ENCODE measurements at regions of chr5 and their contacts with region 1.

Region 1: GRCh38 chr5:68215208-68215897 is at the start of gene PIK3R1:
- DNase-seq: peak; percentile 92 to 95
- ATAC-seq: peak; percentile 81 to 84
- H3K4me3 ChIP-seq: peak within 1 kb of the TSS; percentile 85 to 100 (median 92)
- H3K27ac ChIP-seq: peak within 1 kb of the TSS; percentile 94 to 98 (median 96)
- H3K4me1 ChIP-seq: peaks cover 21 to 28% of the 10 kb centered on the region in 2 donors
- H3K27me3 ChIP-seq: no peaks in the 10 kb centered on the region
- CTCF ChIP-seq: peak; percentile 55 to 67 (median 55)
- POLR2A ChIP-seq: peak; percentile 98 to 99
- total RNA-seq, gene PIK3R1: 87.2 to 129 (median 100) TPM

Region 2: DNA sequence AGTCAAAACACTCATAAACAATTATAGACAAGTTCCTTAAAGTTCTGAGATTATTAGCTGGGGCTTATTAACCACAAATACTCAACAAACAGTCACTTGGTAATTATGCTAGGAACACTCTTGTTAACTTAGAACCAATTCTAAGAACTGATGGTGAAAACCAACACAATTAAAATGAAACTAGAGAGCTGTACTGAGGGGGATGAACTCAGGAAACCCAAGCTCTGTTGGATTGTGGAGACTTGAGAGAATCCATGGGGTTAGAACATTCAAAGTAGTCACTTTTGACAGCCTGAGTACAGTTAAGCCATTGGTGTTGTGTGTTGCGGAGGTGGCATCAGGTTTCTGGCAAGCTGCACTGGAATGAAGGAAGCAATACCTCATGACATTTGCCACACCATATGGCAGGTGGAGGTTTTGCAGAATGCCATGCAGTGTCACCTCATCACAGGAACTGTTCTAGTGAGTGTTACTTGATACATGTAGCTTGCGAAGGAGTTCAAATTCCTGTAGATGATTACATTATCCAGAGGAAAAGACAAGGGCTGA is 537.9 kb before region 1 on chr5:
- in situ Hi-C with region 1: no loop called
- intact Hi-C with region 1: loop called (anchors 5 kb)
- DNase-seq: peak; percentile 92 to 96
- ATAC-seq: peak; percentile 97 to 99
- H3K4me3 ChIP-seq: no peak overlapping the region
- H3K27ac ChIP-seq: peak overlapping the region; percentile 81 to 82 (median 81)
- H3K4me1 ChIP-seq: peaks cover 20 to 26% of the 10 kb centered on the region in 2 donors
- H3K27me3 ChIP-seq: no peaks in the 10 kb centered on the region
- CTCF ChIP-seq: no peak
- POLR2A ChIP-seq: peak in 1 of 2 donors; percentile 30

Region 3: DNA sequence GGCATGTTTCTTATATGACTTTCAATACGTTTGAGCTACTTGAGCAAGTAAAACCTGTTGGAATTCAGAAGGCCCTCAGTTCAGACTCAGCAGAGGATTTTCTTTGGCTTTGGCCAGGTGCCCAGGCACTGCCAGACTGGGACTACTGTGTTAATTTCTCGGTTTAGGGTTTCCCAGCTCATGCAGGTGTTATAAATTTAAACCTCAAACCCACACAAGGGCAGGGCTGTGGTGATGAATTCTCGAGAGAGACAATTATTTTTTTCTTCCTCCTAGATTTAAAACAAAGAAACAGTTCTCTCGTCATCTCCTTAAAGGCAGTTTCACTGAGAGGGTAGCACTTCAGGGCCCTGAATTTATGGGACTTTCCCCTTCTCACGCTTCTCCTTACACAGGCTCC is 405.8 kb before region 1 on chr5:
- in situ Hi-C with region 1: no loop called
- intact Hi-C with region 1: loop called (anchors 1 kb)
- DNase-seq: no peak
- ATAC-seq: no peak
- H3K4me3 ChIP-seq: no peak overlapping the region
- H3K27ac ChIP-seq: peak overlapping the region; percentile 91 to 95 (median 92)
- H3K4me1 ChIP-seq: peaks cover 39 to 44% of the 10 kb centered on the region in 2 donors
- H3K27me3 ChIP-seq: no peaks in the 10 kb centered on the region
- CTCF ChIP-seq: no peak
- POLR2A ChIP-seq: no peak

Region 4: DNA sequence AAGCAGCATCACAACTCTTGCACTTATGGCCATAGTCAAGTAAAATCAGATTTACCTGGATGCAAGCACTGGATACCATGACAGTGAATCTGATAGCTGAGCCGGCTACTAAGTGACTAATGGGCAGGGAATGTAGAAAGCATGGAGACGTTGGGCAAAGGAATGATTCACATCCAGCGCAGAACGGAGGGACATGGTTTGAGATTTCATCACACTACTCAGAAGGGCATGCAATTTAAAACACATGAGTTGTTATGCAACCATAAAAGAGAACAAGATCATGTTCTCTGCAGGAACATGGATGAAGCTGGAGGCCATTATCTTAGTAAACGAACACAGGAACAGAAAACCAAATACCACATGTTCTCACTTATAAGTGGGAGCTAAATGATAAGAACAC is 168.9 kb before region 1 on chr5:
- in situ Hi-C with region 1: no loop called
- intact Hi-C with region 1: loop called (anchors 1 kb)
- DNase-seq: peak; percentile 54 to 84
- ATAC-seq: peak; percentile 97 to 100
- H3K4me3 ChIP-seq: no peak overlapping the region
- H3K27ac ChIP-seq: peak overlapping the region; percentile 63 to 74 (median 64)
- H3K4me1 ChIP-seq: peaks cover 0 to 3% of the 10 kb centered on the region in 2 donors
- H3K27me3 ChIP-seq: no peaks in the 10 kb centered on the region
- CTCF ChIP-seq: peak in 1 of 5 experiments; percentile 22
- POLR2A ChIP-seq: no peak

Region 5: DNA sequence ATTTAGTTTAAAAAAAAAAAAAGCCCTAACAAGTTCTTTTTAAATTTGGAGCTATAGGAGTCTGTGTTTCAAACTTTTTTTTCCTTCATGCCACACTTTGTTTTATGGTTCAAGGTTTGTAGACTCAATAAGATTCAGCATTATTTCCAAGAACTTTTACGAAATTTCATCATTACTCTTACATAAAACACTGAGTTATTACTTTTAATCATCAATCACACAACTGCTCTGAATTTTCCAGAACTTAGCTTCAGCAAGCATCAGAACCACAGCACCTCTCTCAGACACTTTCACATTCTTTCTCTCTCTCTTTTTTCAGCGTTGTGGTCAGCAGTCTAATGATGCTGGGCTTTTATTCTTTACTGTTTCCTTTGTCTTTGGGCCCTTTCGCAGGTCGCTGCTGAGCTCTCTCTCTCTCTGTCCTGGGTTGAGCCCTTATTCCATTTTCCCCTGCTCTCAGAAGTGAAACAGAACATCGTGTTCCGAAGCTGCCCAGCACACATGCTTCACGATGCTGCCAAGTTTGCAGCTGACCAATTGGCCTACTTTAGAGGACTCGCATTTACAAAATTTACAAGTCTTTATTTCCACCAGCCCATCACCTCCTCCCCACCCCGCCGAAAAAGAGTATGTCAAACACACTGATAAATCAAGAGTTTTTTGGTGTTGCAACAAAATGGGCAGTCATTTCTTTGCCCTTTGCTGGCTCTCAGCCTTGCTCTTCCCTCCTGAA is 44.4 kb before region 1 on chr5:
- in situ Hi-C with region 1: no loop called
- intact Hi-C with region 1: loop called (anchors 1 kb)
- DNase-seq: peak; percentile 82 to 93
- ATAC-seq: peak; percentile 99 to 100
- H3K4me3 ChIP-seq: peak overlapping the region; percentile 18 to 31 (median 26)
- H3K27ac ChIP-seq: peak overlapping the region; percentile 73 to 86 (median 85)
- H3K4me1 ChIP-seq: peaks cover 27 to 31% of the 10 kb centered on the region in 2 donors
- H3K27me3 ChIP-seq: no peaks in the 10 kb centered on the region
- CTCF ChIP-seq: no peak
- POLR2A ChIP-seq: peak in 1 of 2 donors; percentile 30

Region 6: DNA sequence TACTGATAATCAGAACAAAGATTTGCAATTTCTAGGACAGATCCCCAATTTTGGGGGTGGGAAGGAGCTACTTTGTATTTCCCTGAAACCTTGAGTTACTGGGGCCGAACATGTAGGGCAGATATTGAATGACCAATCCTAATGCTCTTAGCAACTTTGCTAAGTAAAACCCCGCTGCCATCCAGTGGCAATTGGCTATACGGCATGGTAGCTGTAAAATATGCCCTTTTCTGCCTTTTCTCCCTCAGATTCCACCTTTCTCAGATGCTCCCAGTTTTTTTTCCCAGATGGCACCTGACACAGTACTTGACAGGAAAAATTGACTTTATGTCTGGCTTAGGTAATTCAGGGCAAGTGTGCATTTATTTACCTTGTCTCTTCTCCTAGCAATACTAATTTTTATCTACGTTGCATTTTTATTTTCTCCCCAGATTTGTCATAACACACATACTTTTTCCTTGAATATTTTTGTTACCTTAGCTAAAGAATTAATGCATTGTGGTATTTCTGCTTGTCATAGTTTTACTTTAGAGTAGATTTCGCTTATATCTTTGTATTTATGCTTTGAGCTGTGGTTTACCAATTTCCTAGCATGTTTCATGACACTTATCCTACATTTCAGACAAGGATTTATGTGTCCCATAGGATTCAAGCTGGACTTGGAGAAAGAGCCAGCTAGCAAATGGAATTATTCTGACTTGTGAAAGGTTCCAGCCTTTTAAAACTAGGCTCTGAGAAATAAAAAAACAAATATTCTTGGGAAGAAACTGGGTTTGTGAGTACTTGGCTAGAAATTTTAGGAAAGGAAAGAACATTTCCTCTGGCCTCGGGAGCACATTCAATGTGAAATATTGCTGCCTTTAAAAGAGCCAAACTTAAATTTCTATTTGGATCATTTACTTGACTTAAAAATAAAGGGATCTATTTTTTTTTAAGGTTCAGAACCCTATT is 37.6 kb after region 1 on chr5:
- in situ Hi-C with region 1: no loop called
- intact Hi-C with region 1: loop called (anchors 5 kb)
- DNase-seq: peak; percentile 36 to 61
- ATAC-seq: peak; percentile 77 to 83
- H3K4me3 ChIP-seq: peak overlapping the region in 3 of 4 donors; percentile 6 to 28 (median 19)
- H3K27ac ChIP-seq: peak overlapping the region; percentile 67 to 75 (median 74)
- H3K4me1 ChIP-seq: peaks cover 80 to 88% of the 10 kb centered on the region in 2 donors
- H3K27me3 ChIP-seq: no peaks in the 10 kb centered on the region
- CTCF ChIP-seq: peak; percentile 56 to 86 (median 73)
- POLR2A ChIP-seq: no peak

Measured in gastrocnemius medialis (tissue), 4 donors.